ENCODE measurements at regions of chr12 and their contacts with region 1.

Region 1: DNA sequence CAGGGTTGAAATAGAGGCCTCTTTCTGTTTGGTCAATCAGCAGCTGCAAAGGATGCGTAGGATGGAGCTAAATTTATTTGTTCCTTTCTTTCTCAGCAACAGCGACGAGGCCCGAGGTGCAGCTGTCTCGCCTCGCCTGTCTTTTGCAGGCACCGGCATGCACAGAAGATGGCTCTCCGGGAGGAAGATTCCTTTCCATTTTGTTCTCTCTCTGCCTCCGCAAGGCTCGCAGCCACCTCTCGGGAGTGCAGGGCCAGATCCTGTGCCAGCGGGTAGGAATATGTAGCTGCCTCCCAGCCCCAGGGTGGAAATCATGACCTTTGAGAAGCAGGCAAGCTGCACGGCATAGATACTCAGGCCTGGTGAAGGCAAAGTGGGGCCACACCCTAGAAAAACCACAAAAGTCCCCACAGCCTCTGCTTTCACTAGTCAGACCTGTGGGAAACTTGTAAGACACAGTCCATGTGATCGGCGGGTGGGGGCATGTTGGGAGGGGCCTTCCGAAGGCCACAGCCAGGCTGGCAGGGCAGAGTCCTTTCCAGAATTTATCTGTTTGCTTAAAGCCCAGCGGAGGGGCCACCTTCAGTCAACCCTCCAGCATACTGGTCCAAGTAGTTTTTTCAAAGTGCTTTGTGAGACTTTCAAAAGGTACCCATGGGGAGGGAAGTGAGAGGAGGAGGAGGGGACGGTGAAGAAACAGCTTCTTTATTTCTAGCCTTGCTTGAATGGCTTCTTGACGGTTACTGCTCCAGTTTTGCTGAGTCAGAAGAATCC is at the start of gene MAP1LC3B2:
- DNase-seq: peak; percentile 34 to 86 (median 68)
- ATAC-seq: peak; percentile 91 to 93
- H3K4me3 Mint-ChIP-seq: peak within 1 kb of the TSS; percentile 78 to 91 (median 86)
- H3K27ac Mint-ChIP-seq: peak within 1 kb of the TSS; percentile 87 to 97 (median 95)
- H3K4me1 Mint-ChIP-seq: peaks cover 18 to 54% (median 41%) of the 10 kb centered on the region in 4 donors
- H3K27me3 Mint-ChIP-seq: peaks cover 0 to 1% (median 0%) of the 10 kb centered on the region in 5 donors
- polyA plus RNA-seq, gene MAP1LC3B2: 5.4 to 10.3 (median 7.7) TPM

Region 2: DNA sequence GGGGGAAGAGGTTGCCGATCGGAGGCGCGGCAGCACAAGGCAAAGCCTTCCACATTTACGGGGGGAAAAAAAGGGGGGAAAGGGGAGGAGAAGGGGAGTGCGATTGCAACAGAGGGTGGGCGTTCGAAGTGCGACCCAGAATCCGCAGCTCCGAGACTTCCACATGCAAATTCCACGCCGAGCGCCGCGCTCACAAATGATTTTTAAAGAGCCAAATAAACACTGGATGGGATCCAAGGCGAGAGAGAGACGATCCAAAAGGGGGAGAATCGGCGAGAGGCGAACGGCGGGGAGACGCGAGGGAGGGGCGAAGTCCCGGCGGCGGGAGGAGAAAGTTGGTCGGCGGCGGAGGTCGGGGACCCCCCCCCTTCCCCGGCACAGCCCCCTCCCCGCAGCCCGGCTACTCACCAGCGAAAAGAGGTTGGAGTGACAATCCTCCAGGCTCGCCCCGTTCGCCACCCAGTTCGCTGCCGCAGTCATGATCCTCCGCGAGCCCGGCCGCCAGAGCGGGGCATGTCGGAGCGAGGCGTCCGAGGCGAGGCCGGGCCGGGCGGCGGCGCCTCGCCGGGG is 282.6 kb before region 1 on chr12:
- POLR2A ChIA-PET with region 1: interaction called, 11 read pairs
- DNase-seq: peak; percentile 59 to 85 (median 69)
- ATAC-seq: peak; percentile 45 to 58
- H3K4me3 Mint-ChIP-seq: peak overlapping the region; percentile 91 to 98 (median 96)
- H3K27ac Mint-ChIP-seq: peak overlapping the region; percentile 93 to 98 (median 95)
- H3K4me1 Mint-ChIP-seq: peaks cover 15 to 48% (median 37%) of the 10 kb centered on the region in 4 donors
- H3K27me3 Mint-ChIP-seq: no peaks in the 10 kb centered on the region

Region 3: GRCh38 chr12:116508145-116509121 is 50.9 kb before region 1 on chr12:
- POLR2A ChIA-PET with region 1: interaction called, 10 read pairs
- DNase-seq: peak in 7 of 10 donors; percentile 4 to 67 (median 19)
- ATAC-seq: peak; percentile 59 to 97
- H3K4me3 Mint-ChIP-seq: peak overlapping the region in 9 of 10 donors; percentile 62 to 79 (median 73)
- H3K27ac Mint-ChIP-seq: no peak overlapping the region
- H3K4me1 Mint-ChIP-seq: peaks cover 2 to 12% (median 6%) of the 10 kb centered on the region in 4 donors
- H3K27me3 Mint-ChIP-seq: peaks cover 0 to 6% (median 2%) of the 10 kb centered on the region in 5 donors

Region 4: DNA sequence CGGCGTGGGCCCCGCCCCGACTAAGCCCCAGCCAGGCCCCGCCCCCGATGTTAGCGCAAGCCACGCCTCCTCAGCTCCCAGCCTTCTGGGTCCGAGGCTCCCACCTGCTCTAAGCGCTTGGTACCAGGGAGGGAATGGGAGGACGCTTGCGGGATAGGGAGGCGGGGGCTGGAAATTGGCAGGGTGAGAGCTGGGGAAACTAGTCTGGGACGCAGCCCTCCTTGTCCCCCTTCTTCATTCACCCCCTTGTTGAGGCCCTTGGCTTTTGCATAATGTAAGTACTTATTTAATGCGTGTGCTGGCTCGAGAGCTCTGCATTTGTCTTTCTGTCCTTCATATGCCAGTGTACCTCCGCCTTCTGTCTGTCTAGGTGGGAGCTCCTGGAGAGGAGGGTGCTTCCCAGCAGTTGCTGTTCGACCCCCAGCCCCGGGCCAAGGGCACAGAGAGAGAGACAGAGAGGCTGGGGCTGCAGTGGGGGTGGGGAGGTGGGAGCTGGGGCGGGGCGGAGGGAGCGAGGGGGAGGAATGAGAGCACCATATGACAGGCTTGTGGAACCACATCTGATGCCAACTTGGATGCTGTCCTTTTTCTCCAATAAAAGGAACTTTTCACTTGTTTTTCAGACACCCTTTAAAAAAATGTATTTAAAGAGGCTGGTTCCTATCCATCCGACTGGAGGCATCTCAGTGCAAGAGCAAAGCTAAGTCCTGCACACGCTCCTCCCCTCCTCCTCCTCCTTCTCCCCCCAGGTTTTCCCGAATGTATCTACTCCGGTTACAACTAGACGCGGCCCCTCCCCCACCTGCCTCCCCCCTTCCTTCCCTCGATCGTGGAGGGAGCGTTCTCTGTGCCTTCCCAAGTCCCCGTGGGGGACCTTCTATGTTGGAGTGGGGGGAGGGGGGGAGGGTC is 25.8 kb before region 1 on chr12:
- POLR2A ChIA-PET with region 1: interaction called, 10 read pairs
- DNase-seq: peak; percentile 54 to 83 (median 74)
- ATAC-seq: peak; percentile 91 to 93
- H3K4me3 Mint-ChIP-seq: peak overlapping the region; percentile 87 to 96 (median 92)
- H3K27ac Mint-ChIP-seq: peak overlapping the region in 8 of 10 donors; percentile 32 to 91 (median 59)
- H3K4me1 Mint-ChIP-seq: peaks cover 15 to 43% (median 26%) of the 10 kb centered on the region in 4 donors
- H3K27me3 Mint-ChIP-seq: peaks cover 0 to 4% (median 2%) of the 10 kb centered on the region in 5 donors

Region 5: DNA sequence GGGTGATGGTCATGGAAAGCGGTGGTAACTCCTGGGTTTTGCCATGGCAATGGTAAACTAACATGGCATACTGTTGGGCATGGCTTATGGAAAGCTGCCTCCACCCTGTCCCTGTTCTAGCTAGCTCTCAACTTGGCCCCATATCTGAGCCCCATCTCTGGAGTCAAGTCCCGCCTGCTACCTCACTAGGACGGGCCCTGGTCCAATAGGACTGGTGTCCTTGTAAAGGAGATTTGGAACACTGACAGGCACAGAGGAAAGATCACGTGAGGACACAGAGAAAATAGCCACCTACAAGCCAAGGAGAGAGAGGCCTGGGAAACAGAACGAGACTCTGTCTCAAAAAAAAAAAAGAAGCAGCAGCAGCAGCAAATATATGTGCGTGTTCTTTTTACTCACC is 238.5 kb after region 1 on chr12:
- POLR2A ChIA-PET with region 1: no interaction called
- DNase-seq: no peak
- ATAC-seq: no peak
- H3K4me3 Mint-ChIP-seq: no peak overlapping the region
- H3K27ac Mint-ChIP-seq: peak overlapping the region in 1 of 10 donors; percentile 30
- H3K4me1 Mint-ChIP-seq: peaks cover 0 to 4% (median 0%) of the 10 kb centered on the region in 4 donors
- H3K27me3 Mint-ChIP-seq: no peaks in the 10 kb centered on the region

Measured in naive thymus-derived CD8-positive, alpha-beta T cell (primary cell).